ENCODE measurements at regions of chr14 and their contacts with region 1.

Region 1: DNA sequence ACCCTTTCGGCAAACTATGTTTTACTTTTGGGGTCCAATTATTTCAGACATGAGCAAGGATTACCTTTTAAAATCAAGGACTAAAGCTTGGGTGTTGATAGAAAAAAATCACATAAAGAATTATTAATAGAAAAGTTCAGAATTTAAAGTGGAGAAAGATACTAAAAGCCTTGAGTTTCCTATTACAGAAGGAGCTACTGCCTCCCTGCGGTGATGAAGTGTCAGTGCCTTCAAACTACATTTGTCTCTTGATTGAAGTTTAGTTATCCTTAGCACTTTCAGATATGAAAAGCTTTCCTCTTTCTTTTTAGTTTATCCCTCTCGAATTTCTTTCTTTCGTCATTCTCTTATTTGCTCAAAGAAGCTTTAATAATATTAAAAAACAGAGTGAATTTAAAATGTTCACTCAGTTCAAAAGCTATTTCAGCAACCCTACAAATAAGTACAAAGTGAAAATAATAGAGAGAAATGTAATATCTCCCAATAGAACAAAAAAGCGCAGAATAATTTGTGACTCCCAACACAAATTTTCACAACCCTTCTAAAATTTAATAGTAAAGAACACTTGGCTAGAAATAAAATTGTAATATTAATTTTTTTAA is 87.6 kb downstream of the SEC23A start:
- DNase-seq: no peak
- ATAC-seq: peak; percentile 81
- H3K4me3 ChIP-seq: no peak overlapping the region
- H3K27ac ChIP-seq: no peak overlapping the region
- H3K4me1 ChIP-seq: no peaks in the 10 kb centered on the region
- H3K27me3 ChIP-seq: no peaks in the 10 kb centered on the region
- CTCF ChIP-seq: peak; percentile 66 to 76 (median 67); a peak in 5 of 6 replicates
- EP300 ChIP-seq: no peak
- POLR2A ChIP-seq: no peak
- RAD21 ChIP-seq: peak; percentile 82

Region 2: GRCh38 chr14:37230551-37231194 is 1784.8 kb before region 1 on chr14:
- CTCF ChIA-PET with region 1: no interaction called
- POLR2A ChIA-PET with region 1: no interaction called
- RAD21 ChIA-PET with region 1: no interaction called
- SMC1A ChIA-PET with region 1: no interaction called
- in situ Hi-C with region 1: loop called (anchors 25 kb)
- intact Hi-C with region 1: no loop called
- DNase-seq: no peak
- ATAC-seq: peak; percentile 71
- H3K4me3 ChIP-seq: no peak overlapping the region
- H3K27ac ChIP-seq: no peak overlapping the region
- H3K4me1 ChIP-seq: no peaks in the 10 kb centered on the region
- H3K27me3 ChIP-seq: no peaks in the 10 kb centered on the region
- CTCF ChIP-seq: peak; percentile 53 to 59 (median 56)
- EP300 ChIP-seq: no peak
- POLR2A ChIP-seq: no peak
- RAD21 ChIP-seq: peak; percentile 37; the same call in 1 of the 2 replicates

Region 3: GRCh38 chr14:37903343-37904191 is 1111.9 kb before region 1 on chr14:
- CTCF ChIA-PET with region 1: no interaction called
- POLR2A ChIA-PET with region 1: no interaction called
- RAD21 ChIA-PET with region 1: no interaction called
- SMC1A ChIA-PET with region 1: no interaction called
- in situ Hi-C with region 1: loop called (anchors 10 kb)
- intact Hi-C with region 1: no loop called
- DNase-seq: no peak
- ATAC-seq: peak; percentile 42; the same call in 1 of the 3 replicates
- H3K4me3 ChIP-seq: no peak overlapping the region
- H3K27ac ChIP-seq: no peak overlapping the region
- H3K4me1 ChIP-seq: no peaks in the 10 kb centered on the region
- H3K27me3 ChIP-seq: no peaks in the 10 kb centered on the region
- CTCF ChIP-seq: peak; percentile 30 to 50 (median 41); a peak in 5 of 6 replicates
- EP300 ChIP-seq: no peak
- POLR2A ChIP-seq: no peak
- RAD21 ChIP-seq: peak; percentile 50

Region 4: GRCh38 chr14:38721822-38722431 is 293.5 kb before region 1 on chr14:
- CTCF ChIA-PET with region 1: interaction called, 31 read pairs
- POLR2A ChIA-PET with region 1: no interaction called
- RAD21 ChIA-PET with region 1: interaction called, 3 read pairs
- SMC1A ChIA-PET with region 1: interaction called, 19 read pairs
- in situ Hi-C with region 1: loop called (anchors 10 kb)
- intact Hi-C with region 1: loop called (anchors 2 kb)
- DNase-seq: peak; percentile 4
- ATAC-seq: peak; percentile 89
- H3K4me3 ChIP-seq: no peak overlapping the region
- H3K27ac ChIP-seq: no peak overlapping the region
- H3K4me1 ChIP-seq: no peaks in the 10 kb centered on the region
- H3K27me3 ChIP-seq: no peaks in the 10 kb centered on the region
- CTCF ChIP-seq: peak; percentile 69 to 84 (median 74)
- EP300 ChIP-seq: no peak
- POLR2A ChIP-seq: no peak
- RAD21 ChIP-seq: peak; percentile 74

Region 5: DNA sequence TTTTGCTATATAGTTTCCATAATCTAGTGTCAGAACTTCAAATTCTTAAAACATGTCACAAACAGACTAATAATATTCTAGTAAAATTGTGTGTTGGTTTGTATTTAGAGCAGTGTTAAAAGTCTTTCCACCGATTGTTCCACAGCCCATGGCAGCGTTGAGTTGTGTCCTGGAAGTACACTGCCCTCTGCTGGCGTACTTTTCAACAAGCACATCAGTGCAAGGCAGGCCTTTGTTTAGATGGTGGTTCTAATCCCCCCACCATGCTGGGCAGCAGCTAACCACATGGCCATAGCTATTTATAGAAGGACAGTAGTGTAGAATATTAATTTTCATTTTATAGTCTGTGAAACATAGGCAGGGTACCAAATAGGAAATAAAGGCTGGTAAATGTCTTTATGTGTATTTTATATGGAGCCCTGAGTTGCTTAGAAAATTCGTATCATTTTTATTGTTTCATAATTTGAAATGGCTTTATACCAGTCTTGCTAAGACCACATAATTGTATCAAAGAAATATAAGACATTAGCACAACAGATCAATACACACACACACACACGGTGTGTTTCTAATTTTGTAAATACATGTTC is 147.8 kb before region 1 on chr14:
- CTCF ChIA-PET with region 1: interaction called, 9 read pairs
- POLR2A ChIA-PET with region 1: no interaction called
- RAD21 ChIA-PET with region 1: interaction called, 8 read pairs
- SMC1A ChIA-PET with region 1: interaction called, 11 read pairs
- in situ Hi-C with region 1: no loop called
- intact Hi-C with region 1: no loop called
- DNase-seq: no peak
- ATAC-seq: peak; percentile 98
- H3K4me3 ChIP-seq: no peak overlapping the region
- H3K27ac ChIP-seq: no peak overlapping the region
- H3K4me1 ChIP-seq: no peaks in the 10 kb centered on the region
- H3K27me3 ChIP-seq: no peaks in the 10 kb centered on the region
- CTCF ChIP-seq: peak; percentile 77 to 80 (median 79)
- EP300 ChIP-seq: no peak
- POLR2A ChIP-seq: no peak
- RAD21 ChIP-seq: peak; percentile 71

Region 6: DNA sequence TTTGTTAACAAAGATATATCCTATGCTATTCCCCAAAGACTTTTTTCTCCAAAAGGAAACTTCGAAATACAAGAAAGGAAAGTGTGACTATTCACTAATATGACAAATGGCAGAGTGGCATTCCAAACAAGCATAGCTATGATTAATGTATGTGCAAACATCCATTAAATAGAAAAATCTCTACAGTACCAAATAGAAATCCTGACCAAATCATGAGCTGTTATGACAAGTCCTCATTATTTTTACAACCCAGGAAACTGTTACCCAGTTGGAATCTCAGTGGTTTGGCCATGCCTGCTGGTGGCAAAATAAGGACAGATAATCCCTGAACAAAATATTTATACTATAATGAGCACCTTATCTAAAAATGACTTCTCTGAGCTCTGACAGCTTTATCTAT is 114.6 kb before region 1 on chr14:
- CTCF ChIA-PET with region 1: no interaction called
- POLR2A ChIA-PET with region 1: no interaction called
- RAD21 ChIA-PET with region 1: no interaction called
- SMC1A ChIA-PET with region 1: no interaction called
- in situ Hi-C with region 1: no loop called
- intact Hi-C with region 1: no loop called
- DNase-seq: no peak
- ATAC-seq: no peak
- H3K4me3 ChIP-seq: no peak overlapping the region
- H3K27ac ChIP-seq: no peak overlapping the region
- H3K4me1 ChIP-seq: no peaks in the 10 kb centered on the region
- H3K27me3 ChIP-seq: no peaks in the 10 kb centered on the region
- CTCF ChIP-seq: no peak
- EP300 ChIP-seq: no peak
- POLR2A ChIP-seq: no peak
- RAD21 ChIP-seq: no peak

Region 7: GRCh38 chr14:38994731-38995130 is 20.7 kb before region 1 on chr14:
- CTCF ChIA-PET with region 1: interaction called, 10 read pairs
- POLR2A ChIA-PET with region 1: no interaction called
- RAD21 ChIA-PET with region 1: no interaction called
- SMC1A ChIA-PET with region 1: interaction called, 5 read pairs
- in situ Hi-C with region 1: no loop called
- intact Hi-C with region 1: no loop called
- DNase-seq: no peak
- ATAC-seq: no peak
- H3K4me3 ChIP-seq: no peak overlapping the region
- H3K27ac ChIP-seq: no peak overlapping the region
- H3K4me1 ChIP-seq: peaks cover 5% of the 10 kb centered on the region; the same call in 1 of the 2 replicates
- H3K27me3 ChIP-seq: no peaks in the 10 kb centered on the region
- CTCF ChIP-seq: no peak
- EP300 ChIP-seq: no peak
- POLR2A ChIP-seq: no peak
- RAD21 ChIP-seq: no peak

Region 8: GRCh38 chr14:38999949-39000348 is 15.5 kb before region 1 on chr14:
- CTCF ChIA-PET with region 1: interaction called, 10 read pairs
- POLR2A ChIA-PET with region 1: no interaction called
- RAD21 ChIA-PET with region 1: interaction called, 4 read pairs
- SMC1A ChIA-PET with region 1: interaction called, 7 read pairs
- in situ Hi-C with region 1: no loop called
- intact Hi-C with region 1: no loop called
- DNase-seq: no peak
- ATAC-seq: peak; percentile 68
- H3K4me3 ChIP-seq: no peak overlapping the region
- H3K27ac ChIP-seq: no peak overlapping the region
- H3K4me1 ChIP-seq: no peaks in the 10 kb centered on the region
- H3K27me3 ChIP-seq: no peaks in the 10 kb centered on the region
- CTCF ChIP-seq: no peak
- EP300 ChIP-seq: no peak
- POLR2A ChIP-seq: no peak
- RAD21 ChIP-seq: no peak